H1 (cell line): ENCODE measurements at regions of chr1 and their contacts with region 1.

Region 1: GRCh38 chr1:33472349-33472980 is at the start of gene ZSCAN20:
- DNase-seq: peak; percentile 93 to 94
- H3K4me3 ChIP-seq: peak within 1 kb of the TSS; percentile 51 to 73 (median 65)
- H3K27ac ChIP-seq: no peak within 1 kb of the TSS
- H3K4me1 ChIP-seq: peaks cover 0 to 7% (median 2%) of the 10 kb centered on the region in 4 experiments; a peak in 3 of 7 replicates
- H3K27me3 ChIP-seq: no peaks in the 10 kb centered on the region
- CTCF ChIP-seq: 0 out of 4 replicates have a peak, but pooled peaks of 1 of the 3 experiments have one; percentile 2
- EP300 ChIP-seq: no peak
- POLR2A ChIP-seq: peak in 1 of 2 experiments; percentile 36; a peak in 1 of 3 replicates
- RAD21 ChIP-seq: no peak
- total RNA-seq, gene ZSCAN20: 3.4 and 3.7 TPM in 2 replicates

Region 2: GRCh38 chr1:33367485-33368405 is 104.7 kb before region 1 on chr1:
- CTCF ChIA-PET with region 1: interaction called, 76 read pairs
- POLR2A ChIA-PET with region 1: no interaction called
- DNase-seq: peak; percentile 58 to 95
- H3K4me3 ChIP-seq: no peak overlapping the region
- H3K27ac ChIP-seq: no peak overlapping the region
- H3K4me1 ChIP-seq: peaks cover 13 to 29% (median 18%) of the 10 kb centered on the region in 4 experiments
- H3K27me3 ChIP-seq: no peaks in the 10 kb centered on the region; a peak in 2 of 7 replicates
- CTCF ChIP-seq: peak; percentile 94 to 97 (median 97)
- EP300 ChIP-seq: no peak
- POLR2A ChIP-seq: no peak
- RAD21 ChIP-seq: peak; percentile 98 to 99

Region 3: GRCh38 chr1:33443080-33443704 is 29.3 kb before region 1 on chr1:
- CTCF ChIA-PET with region 1: interaction called, 13 read pairs
- POLR2A ChIA-PET with region 1: no interaction called
- DNase-seq: no peak
- H3K4me3 ChIP-seq: no peak overlapping the region
- H3K27ac ChIP-seq: no peak overlapping the region
- H3K4me1 ChIP-seq: peaks cover 0 to 4% (median 2%) of the 10 kb centered on the region in 4 experiments; a peak in 4 of 7 replicates
- H3K27me3 ChIP-seq: no peaks in the 10 kb centered on the region
- CTCF ChIP-seq: no peak
- EP300 ChIP-seq: no peak
- POLR2A ChIP-seq: no peak
- RAD21 ChIP-seq: no peak

Region 4: DNA sequence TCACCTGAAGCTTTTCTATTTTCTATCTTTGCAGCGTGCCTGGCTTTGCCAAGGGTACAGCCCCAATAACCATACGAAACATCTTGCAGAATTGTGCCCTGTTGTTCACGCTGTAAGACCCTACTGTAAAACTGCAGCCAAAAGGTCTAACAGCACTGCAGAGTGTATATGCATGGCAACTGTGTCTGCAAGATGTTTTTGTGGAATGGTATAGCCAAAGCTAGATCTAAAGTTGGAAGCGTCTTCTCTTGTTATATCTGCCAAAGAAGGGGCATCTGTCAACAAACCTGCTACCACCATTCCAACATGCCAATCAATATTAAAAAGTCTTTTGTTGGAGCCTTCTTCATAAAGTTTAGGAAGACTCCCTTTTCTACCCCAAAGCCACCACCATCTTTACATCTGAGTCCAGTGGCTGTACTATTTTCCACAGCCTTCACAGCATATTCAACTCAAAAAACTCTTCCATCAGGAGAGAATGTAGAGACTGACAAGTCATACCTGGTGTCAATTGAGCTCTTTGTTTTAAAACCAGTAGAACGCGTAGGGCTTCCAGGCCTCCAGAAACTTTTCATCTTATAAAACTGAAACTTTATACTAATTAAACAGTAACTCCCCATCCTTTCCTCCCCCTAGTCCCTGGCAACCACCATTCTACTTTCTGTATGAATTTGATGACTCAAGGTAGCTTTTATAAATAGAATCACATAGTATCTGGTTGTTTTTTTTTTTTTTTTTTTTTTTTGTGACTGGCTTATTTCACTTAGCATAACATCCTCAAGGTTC is 40.0 kb after region 1 on chr1:
- CTCF ChIA-PET with region 1: no interaction called
- POLR2A ChIA-PET with region 1: no interaction called
- DNase-seq: no peak
- H3K4me3 ChIP-seq: no peak overlapping the region
- H3K27ac ChIP-seq: no peak overlapping the region
- H3K4me1 ChIP-seq: peaks cover 0 to 7% (median 2%) of the 10 kb centered on the region in 4 experiments; a peak in 5 of 7 replicates
- H3K27me3 ChIP-seq: no peaks in the 10 kb centered on the region
- CTCF ChIP-seq: no peak
- EP300 ChIP-seq: no peak
- POLR2A ChIP-seq: no peak
- RAD21 ChIP-seq: no peak

Region 5: GRCh38 chr1:33735621-33736020 is 263.2 kb after region 1 on chr1:
- CTCF ChIA-PET with region 1: no interaction called
- POLR2A ChIA-PET with region 1: no interaction called
- DNase-seq: no peak
- H3K4me3 ChIP-seq: no peak overlapping the region
- H3K27ac ChIP-seq: no peak overlapping the region
- H3K4me1 ChIP-seq: peaks cover 0 to 6% (median 0%) of the 10 kb centered on the region in 4 experiments; a peak in 2 of 7 replicates
- H3K27me3 ChIP-seq: no peaks in the 10 kb centered on the region
- CTCF ChIP-seq: no peak
- EP300 ChIP-seq: no peak
- POLR2A ChIP-seq: no peak
- RAD21 ChIP-seq: peak; percentile 15 to 28; a peak in 3 of 4 replicates